ENCODE measurements at regions of chr11 and their contacts with region 1.

Region 1: DNA sequence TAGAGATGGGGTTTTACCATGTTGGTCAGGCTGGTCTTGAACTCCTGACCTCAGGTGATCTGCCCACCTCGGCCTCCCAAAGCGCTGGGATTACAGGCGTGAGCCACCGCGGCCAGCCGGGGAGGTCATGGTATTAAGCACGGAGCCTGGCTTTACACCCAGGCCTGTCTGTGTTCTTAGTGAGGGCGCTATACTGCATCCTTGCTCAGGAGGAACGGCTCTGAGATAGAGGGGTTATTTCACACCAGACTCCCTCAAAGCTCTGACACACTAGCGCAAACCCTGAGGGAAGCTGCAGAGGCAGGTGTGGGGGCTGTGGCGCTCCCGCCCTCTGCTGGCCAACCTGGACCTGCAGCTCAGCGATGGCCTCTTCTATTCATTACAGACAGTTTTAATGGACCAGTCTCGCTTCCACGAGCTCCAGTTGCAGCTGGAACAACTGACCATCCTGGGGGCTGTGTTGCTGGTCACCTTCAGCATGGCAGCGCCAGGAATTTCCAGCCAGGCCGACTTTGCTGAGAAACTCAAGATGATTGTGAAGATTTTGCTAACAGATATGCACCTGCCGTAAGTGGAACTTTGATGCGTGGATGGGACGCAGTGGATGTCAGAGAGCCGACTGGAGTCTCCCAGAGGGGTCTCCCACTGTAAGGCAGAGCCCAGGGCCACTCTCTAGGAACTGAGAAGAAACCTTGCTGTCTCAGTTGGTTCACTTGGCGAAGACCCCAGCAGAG is 26.2 kb downstream of the TCP11L1 start:
- DNase-seq: peak; percentile 56 to 77
- ATAC-seq: peak; percentile 77 to 82
- H3K4me3 ChIP-seq: no peak overlapping the region
- H3K27ac ChIP-seq: peak overlapping the region; percentile 85 to 88; a peak in 5 of 6 replicates
- H3K4me1 ChIP-seq: peaks cover 46% of the 10 kb centered on the region
- CTCF ChIP-seq: peak; percentile 88
- EP300 ChIP-seq: no peak
- POLR2A ChIP-seq: no peak
- RAD21 ChIP-seq: peak; percentile 95

Region 2: GRCh38 chr11:32775908-32776307 is 289.7 kb before region 1 on chr11:
- CTCF ChIA-PET with region 1: no interaction called
- POLR2A ChIA-PET with region 1: no interaction called
- DNase-seq: no peak
- ATAC-seq: no peak
- H3K4me3 ChIP-seq: no peak overlapping the region
- H3K27ac ChIP-seq: no peak overlapping the region
- H3K4me1 ChIP-seq: 0 out of 3 replicates have a peak, but pooled peaks cover 4% of the 10 kb centered on the region
- CTCF ChIP-seq: no peak
- EP300 ChIP-seq: no peak
- POLR2A ChIP-seq: no peak
- RAD21 ChIP-seq: no peak

Region 3: DNA sequence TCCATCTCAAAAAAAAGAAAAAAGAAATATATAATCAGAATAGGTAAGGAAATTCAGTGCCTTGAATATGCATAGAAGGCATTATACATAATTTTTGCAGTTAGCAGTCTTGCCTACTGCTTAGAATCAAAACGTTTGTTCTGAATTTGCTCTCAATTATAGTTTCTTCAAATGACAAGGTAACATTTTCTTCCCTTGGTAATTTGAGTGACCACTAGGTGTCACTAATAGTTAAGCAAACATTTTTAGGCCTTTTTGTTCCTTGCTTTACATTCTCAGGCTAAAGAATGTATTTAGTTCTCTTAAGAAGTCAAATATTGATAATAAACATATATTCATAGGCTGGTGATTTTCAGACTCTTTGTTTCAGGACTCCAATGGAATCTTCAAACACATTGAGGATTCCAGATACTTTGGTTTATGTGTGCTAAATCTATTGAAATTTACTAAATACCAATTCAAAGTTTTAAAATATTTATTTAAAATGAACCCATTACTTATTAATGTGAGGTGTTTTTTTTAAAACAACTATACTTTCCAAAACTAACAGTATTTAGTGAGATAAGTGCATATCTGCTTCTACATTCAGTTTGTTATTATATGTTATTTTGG is 105.0 kb before region 1 on chr11:
- CTCF ChIA-PET with region 1: interaction called, 88 read pairs
- POLR2A ChIA-PET with region 1: no interaction called
- DNase-seq: peak in 1 of 2 experiments; percentile 63
- ATAC-seq: peak in 1 of 2 experiments; percentile 64; a peak in 3 of 6 replicates
- H3K4me3 ChIP-seq: no peak overlapping the region
- H3K27ac ChIP-seq: no peak overlapping the region
- H3K4me1 ChIP-seq: peaks cover 4% of the 10 kb centered on the region; the same call in 1 of the 3 replicates
- CTCF ChIP-seq: peak; percentile 82
- EP300 ChIP-seq: no peak
- POLR2A ChIP-seq: no peak
- RAD21 ChIP-seq: peak; percentile 85 to 87

Region 4: DNA sequence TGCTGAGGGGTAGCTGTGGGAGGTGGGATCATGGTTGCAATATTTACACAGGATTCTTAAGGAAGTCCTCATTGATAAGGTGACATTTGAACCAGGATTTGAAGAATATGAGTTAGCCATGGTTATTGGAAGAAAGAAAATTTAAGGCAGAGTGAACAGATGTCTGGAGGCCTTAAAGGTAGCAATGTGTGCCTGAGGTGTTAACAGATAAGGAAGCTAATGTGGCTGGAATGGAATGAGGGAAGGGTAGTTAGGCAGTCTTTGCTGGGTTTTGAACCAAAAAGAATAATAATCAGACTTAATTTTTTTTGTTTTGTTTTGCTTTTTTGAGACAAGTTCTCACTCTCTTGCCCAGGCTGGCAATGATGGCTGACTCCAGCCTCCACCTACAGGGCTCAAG is 59.6 kb before region 1 on chr11:
- CTCF ChIA-PET with region 1: interaction called, 20 read pairs
- POLR2A ChIA-PET with region 1: no interaction called
- DNase-seq: no peak
- ATAC-seq: no peak
- H3K4me3 ChIP-seq: no peak overlapping the region
- H3K27ac ChIP-seq: no peak overlapping the region
- H3K4me1 ChIP-seq: peaks cover under 1% of the 10 kb centered on the region
- CTCF ChIP-seq: no peak
- EP300 ChIP-seq: no peak
- POLR2A ChIP-seq: no peak
- RAD21 ChIP-seq: no peak

Region 5: GRCh38 chr11:33033493-33033892 is 32.1 kb before region 1 on chr11:
- CTCF ChIA-PET with region 1: interaction called, 31 read pairs
- POLR2A ChIA-PET with region 1: interaction called, 34 read pairs
- DNase-seq: no peak
- ATAC-seq: no peak
- H3K4me3 ChIP-seq: no peak overlapping the region
- H3K27ac ChIP-seq: no peak overlapping the region
- H3K4me1 ChIP-seq: peaks cover 7% of the 10 kb centered on the region; the same call in 2 of the 3 replicates
- CTCF ChIP-seq: no peak
- EP300 ChIP-seq: no peak
- POLR2A ChIP-seq: no peak
- RAD21 ChIP-seq: no peak

Region 6: GRCh38 chr11:33045551-33046255 is 19.9 kb before region 1 on chr11:
- CTCF ChIA-PET with region 1: interaction called, 76 read pairs
- POLR2A ChIA-PET with region 1: interaction called, 17 read pairs
- DNase-seq: peak in 1 of 2 experiments; percentile 86
- ATAC-seq: peak in 1 of 2 experiments; percentile 69; a peak in 3 of 6 replicates
- H3K4me3 ChIP-seq: no peak overlapping the region
- H3K27ac ChIP-seq: peak overlapping the region; percentile 91 to 96
- H3K4me1 ChIP-seq: peaks cover 97% of the 10 kb centered on the region
- CTCF ChIP-seq: no peak
- EP300 ChIP-seq: no peak
- POLR2A ChIP-seq: no peak
- RAD21 ChIP-seq: no peak

Region 7: DNA sequence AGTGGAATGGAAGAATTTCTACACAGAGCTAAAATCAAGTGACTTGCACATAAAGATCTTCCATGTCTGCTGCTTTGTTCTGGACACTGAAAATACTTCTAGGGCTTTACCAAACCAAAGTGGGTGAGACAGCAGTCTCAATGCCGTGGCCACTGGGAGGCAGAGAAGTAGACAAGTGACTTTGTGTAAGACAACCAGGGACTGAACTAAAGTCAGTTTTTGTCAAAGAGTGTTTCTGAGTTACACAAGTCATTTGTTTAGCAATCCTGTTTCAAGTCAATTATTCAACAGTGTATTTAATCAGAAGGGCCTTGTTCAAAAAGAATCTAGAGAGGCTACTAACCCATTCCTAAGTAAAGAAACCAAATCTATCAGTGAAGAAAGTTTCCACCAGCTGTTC is 20.4 kb after region 1 on chr11:
- CTCF ChIA-PET with region 1: interaction called, 13 read pairs
- POLR2A ChIA-PET with region 1: no interaction called
- DNase-seq: no peak
- ATAC-seq: peak in 1 of 2 experiments; percentile 49; a peak in 2 of 6 replicates
- H3K4me3 ChIP-seq: no peak overlapping the region
- H3K27ac ChIP-seq: no peak overlapping the region
- H3K4me1 ChIP-seq: peaks cover 14% of the 10 kb centered on the region
- CTCF ChIP-seq: no peak
- EP300 ChIP-seq: no peak
- POLR2A ChIP-seq: no peak
- RAD21 ChIP-seq: no peak

Region 8: GRCh38 chr11:33179348-33179803 is 113.8 kb after region 1 on chr11:
- CTCF ChIA-PET with region 1: no interaction called
- POLR2A ChIA-PET with region 1: no interaction called
- DNase-seq: no peak
- ATAC-seq: no peak
- H3K4me3 ChIP-seq: no peak overlapping the region
- H3K27ac ChIP-seq: no peak overlapping the region
- H3K4me1 ChIP-seq: peaks cover 12% of the 10 kb centered on the region
- CTCF ChIP-seq: no peak
- EP300 ChIP-seq: no peak
- POLR2A ChIP-seq: no peak
- RAD21 ChIP-seq: no peak

Measured in A549 (cell line).